Sciatic nerve (tissue), 2 donors: ENCODE measurements at regions of chr21 and their contacts with region 1.

Region 1: DNA sequence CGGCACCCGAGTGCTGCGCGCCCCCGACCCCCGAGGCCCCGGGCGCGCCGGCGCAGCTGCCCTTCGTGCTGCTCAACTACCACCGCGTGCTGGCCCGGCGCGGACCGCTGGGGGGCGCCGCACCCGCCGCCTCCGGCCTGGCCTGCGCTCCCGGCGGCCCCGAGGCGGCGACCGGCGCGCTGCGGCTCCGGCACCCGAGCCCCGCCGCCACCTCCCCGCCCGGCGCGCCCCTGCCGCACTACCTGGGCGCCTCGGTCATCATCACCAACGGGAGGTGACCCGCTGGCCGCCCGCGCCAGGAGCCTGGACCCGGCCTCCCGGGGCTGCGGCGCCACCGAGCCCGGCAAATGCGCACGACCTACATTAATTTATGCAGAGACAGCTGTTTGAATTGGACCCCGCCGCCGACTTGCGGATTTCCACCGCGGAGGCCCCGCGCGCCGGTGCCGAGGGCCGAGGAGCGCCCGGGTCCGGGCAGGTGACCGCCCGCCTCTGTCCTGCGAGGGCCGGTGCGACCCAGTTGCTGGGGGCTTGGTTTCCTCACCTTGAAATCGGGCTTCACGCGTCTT is 49.0 kb downstream of the SIM2 start:
- DNase-seq: no peak
- ATAC-seq: no peak

Region 2: DNA sequence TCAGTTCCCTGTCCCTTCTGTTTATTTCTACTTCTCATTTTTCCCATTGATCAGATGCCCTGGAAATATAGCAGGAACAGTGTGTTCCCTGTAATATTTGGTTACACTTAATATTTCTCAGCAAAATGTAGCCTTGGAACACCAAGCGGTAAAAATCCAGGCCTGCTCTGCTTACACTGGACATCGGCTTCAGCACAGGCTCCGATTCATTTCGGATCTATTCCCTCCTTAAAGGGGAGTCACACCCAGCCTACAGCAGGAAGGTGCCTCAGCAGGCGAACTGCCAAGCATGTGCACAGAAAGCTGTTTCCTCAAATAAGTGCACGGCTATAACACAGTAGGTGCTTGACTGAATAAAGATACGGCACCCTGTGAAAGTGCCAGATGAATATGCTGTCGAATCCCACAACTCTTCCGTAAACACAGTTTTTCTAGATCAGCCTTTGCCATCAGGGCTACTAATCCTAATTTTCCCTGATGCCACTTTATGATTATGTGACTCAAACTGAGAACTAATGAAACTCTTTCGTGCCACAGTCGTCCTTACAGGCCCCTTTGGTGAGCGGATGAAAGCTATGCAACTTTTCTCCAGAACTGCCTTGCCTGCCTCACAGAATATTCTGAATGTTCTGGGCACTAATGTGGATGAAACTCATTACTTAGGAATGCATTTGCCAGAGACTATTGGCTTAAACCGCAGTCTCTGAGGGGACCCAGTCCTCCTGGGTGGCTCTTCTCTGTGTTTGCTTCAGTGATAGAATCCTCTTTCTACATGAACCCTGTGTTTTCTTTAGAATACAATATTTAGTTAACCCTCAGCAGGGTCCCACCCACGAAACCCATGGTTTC is 1423.3 kb before region 1 on chr21:
- intact Hi-C with region 1: no loop called
- DNase-seq: no peak
- ATAC-seq: peak; percentile 86

Region 3: DNA sequence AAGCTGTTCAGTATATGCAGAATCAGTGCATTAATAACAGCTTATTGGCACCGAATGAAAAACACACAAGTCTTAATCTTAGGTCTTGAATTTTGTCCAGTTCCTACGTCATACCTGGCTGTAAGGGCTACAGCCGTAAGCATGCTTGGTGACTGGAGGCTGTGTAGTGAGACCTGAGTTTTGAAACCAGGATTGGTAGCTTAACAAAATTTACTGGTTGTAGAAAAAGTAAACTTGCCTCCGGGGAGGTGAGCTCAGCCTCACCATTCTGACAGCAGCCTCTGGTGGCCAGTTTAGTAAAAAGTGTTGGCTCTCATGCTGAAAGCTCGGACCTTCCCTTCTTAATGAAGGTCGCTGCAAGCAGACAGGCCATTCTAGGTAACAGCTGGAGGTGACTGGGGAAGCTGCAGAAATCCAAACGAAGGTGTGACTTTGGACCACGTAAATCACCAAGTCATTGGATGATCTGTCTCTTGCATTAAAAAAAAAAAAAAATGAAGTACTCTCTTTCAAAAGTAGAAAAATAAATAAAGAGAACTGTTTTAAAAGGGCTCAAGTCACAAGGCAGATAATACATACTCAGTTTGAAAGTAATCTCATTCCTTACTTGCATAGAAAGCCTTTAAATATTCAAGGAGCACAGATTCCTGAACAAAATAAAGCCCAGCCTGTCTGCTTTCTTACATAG is 169.7 kb after region 1 on chr21:
- intact Hi-C with region 1: loop called (anchors 10 kb)
- DNase-seq: no peak
- ATAC-seq: no peak